MCF 10A (cell line): ENCODE measurements at regions of chr1 and their contacts with region 1.

Region 1: GRCh38 chr1:28259307-28260167 is at the start of gene SESN2:
- DNase-seq: peak; percentile 99
- H3K4me3 Mint-ChIP-seq: peak within 1 kb of the TSS; percentile 86
- H3K27ac Mint-ChIP-seq: peak within 1 kb of the TSS; percentile 98
- H3K4me1 Mint-ChIP-seq: peaks cover 22% of the 10 kb centered on the region
- H3K27me3 Mint-ChIP-seq: no peaks in the 10 kb centered on the region
- CTCF ChIP-seq: no peak
- total RNA-seq, gene SESN2: 106 and 118 TPM in 2 replicates

Region 2: GRCh38 chr1:28235755-28236655 is 23.5 kb before region 1 on chr1 and contains the start of gene ATP5IF1:
- CTCF ChIA-PET with region 1: interaction called, 3 read pairs
- POLR2A ChIA-PET with region 1: interaction called, 362 read pairs
- intact Hi-C with region 1: no loop called
- DNase-seq: peak; percentile 99
- H3K4me3 Mint-ChIP-seq: no peak within 1 kb of the TSS
- H3K27ac Mint-ChIP-seq: no peak within 1 kb of the TSS
- H3K4me1 Mint-ChIP-seq: no peaks in the 10 kb centered on the region
- H3K27me3 Mint-ChIP-seq: no peaks in the 10 kb centered on the region
- CTCF ChIP-seq: no peak
- total RNA-seq, gene ATP5IF1: 214 and 232 TPM in 2 replicates

Region 3: GRCh38 chr1:28282426-28283407 is 23.2 kb after region 1 on chr1:
- CTCF ChIA-PET with region 1: no interaction called
- POLR2A ChIA-PET with region 1: interaction called, 22 read pairs
- intact Hi-C with region 1: no loop called
- DNase-seq: no peak
- H3K4me3 Mint-ChIP-seq: no peak overlapping the region
- H3K27ac Mint-ChIP-seq: no peak overlapping the region
- H3K4me1 Mint-ChIP-seq: no peaks in the 10 kb centered on the region
- H3K27me3 Mint-ChIP-seq: no peaks in the 10 kb centered on the region
- CTCF ChIP-seq: no peak

Region 4: DNA sequence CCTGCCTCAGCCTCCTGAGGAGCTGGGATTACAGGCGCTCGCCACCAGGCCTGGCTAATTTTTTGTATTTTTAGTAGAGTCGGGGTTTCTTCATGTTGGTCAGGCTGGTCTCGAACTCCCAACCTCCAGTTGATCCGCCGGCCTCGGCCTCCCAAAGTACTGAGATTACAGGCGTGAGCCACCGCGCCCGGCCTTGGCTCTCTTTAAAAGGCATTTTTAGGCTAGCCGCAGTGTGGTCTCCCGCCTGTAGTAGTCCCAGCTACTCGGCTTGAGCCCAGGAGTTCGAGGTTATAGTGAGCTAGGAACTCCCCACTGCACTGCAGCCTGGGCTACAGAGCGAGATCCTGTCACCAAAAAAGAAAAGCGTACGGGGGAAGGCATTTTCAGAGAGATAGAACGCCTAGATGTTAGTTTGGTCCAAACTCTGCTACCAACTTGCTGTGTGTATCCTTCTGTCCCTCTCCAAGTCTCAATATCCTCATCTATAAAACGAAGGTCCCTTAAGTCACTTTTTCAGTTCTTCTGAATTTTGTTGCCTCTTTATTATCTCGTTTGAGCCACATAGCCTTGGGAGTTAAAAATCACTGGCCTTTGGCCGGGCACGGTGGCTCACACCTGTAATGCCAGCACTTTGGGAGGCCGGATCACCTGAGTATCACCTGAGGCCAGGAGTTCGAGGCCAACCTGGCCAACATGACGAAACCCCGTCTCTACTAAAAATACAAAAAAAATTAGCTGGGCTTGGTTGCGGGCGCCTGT is 70.0 kb after region 1 on chr1:
- CTCF ChIA-PET with region 1: interaction called, 3 read pairs
- POLR2A ChIA-PET with region 1: interaction called, 33 read pairs
- intact Hi-C with region 1: no loop called
- DNase-seq: peak; percentile 18
- H3K4me3 Mint-ChIP-seq: peak overlapping the region; percentile 93
- H3K27ac Mint-ChIP-seq: peak overlapping the region; percentile 98
- H3K4me1 Mint-ChIP-seq: peaks cover 17% of the 10 kb centered on the region
- H3K27me3 Mint-ChIP-seq: no peaks in the 10 kb centered on the region
- CTCF ChIP-seq: no peak

Region 5: GRCh38 chr1:28354121-28354520 is 94.6 kb after region 1 on chr1:
- CTCF ChIA-PET with region 1: interaction called, 5 read pairs
- POLR2A ChIA-PET with region 1: interaction called, 11 read pairs
- intact Hi-C with region 1: no loop called
- DNase-seq: peak; percentile 37
- H3K4me3 Mint-ChIP-seq: no peak overlapping the region
- H3K27ac Mint-ChIP-seq: peak overlapping the region; percentile 81
- H3K4me1 Mint-ChIP-seq: peaks cover 5% of the 10 kb centered on the region
- H3K27me3 Mint-ChIP-seq: no peaks in the 10 kb centered on the region
- CTCF ChIP-seq: no peak

Region 6: GRCh38 chr1:28369371-28370238 is 110.1 kb after region 1 on chr1 and contains the start of gene PHACTR4:
- CTCF ChIA-PET with region 1: no interaction called
- POLR2A ChIA-PET with region 1: interaction called, 21 read pairs
- intact Hi-C with region 1: no loop called
- DNase-seq: peak; percentile 92
- H3K4me3 Mint-ChIP-seq: peak within 1 kb of the TSS; percentile 91
- H3K27ac Mint-ChIP-seq: peak within 1 kb of the TSS; percentile 76
- H3K4me1 Mint-ChIP-seq: peaks cover 14% of the 10 kb centered on the region
- H3K27me3 Mint-ChIP-seq: no peaks in the 10 kb centered on the region
- CTCF ChIP-seq: no peak
- total RNA-seq, gene PHACTR4: 50.7 and 56.4 TPM in 2 replicates